Activated CD4-positive, alpha-beta memory T cell treated with anti-CD3 and anti-CD28 coated beads, Interleukin-2, amount 10 ng/mL, durations not matched to agents 7 days and 5 days (primary cell): ENCODE measurements at regions of chr12 and their contacts with region 1.

Region 1: GRCh38 chr12:52032804-52033502 is 18.3 kb upstream of the NR4A1 start:
- DNase-seq: peak; percentile 93
- H3K4me3 Mint-ChIP-seq: peak overlapping the region; percentile 68
- H3K27ac Mint-ChIP-seq: peak overlapping the region; percentile 54
- H3K4me1 Mint-ChIP-seq: peaks cover 32% of the 10 kb centered on the region
- H3K27me3 Mint-ChIP-seq: peaks cover 19% of the 10 kb centered on the region

Region 2: GRCh38 chr12:51941011-51941581 is 91.9 kb before region 1 on chr12:
- CTCF ChIA-PET with region 1: no interaction called
- POLR2A ChIA-PET with region 1: no interaction called
- DNase-seq: no peak
- H3K4me3 Mint-ChIP-seq: no peak overlapping the region
- H3K27ac Mint-ChIP-seq: no peak overlapping the region
- H3K4me1 Mint-ChIP-seq: no peaks in the 10 kb centered on the region
- H3K27me3 Mint-ChIP-seq: peaks cover 24% of the 10 kb centered on the region

Region 3: DNA sequence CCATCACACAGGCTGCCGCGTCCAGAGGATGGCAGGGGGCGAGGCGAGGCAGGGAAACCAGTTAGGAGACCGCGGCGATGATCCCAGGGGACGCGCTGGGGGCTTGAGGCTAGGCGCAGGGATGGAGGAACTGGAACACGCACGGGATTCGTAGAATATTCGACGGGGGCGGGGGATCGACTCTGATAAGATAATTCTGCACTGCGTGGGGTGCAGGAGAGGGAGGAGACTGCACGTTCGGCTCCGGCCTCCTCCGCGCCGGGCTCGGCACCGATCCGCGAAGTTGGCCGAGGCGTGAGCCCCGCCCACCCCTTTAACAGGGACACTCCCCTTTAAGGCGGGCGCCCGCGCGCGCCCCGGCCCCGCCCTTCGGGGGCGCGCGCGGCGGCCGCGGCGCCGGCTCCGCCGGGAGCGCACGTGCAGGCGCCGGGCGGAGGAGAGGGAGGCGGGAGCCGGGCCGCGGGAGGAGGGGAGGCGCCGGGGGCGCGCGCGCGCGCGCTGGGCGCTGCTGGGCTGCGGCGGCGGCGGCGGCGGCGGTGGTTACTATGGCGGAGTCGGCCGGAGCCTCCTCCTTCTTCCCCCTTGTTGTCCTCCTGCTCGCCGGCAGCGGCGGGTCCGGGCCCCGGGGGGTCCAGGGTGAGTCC is 81.6 kb before region 1 on chr12 and contains the start of gene ACVR1B:
- CTCF ChIA-PET with region 1: no interaction called
- POLR2A ChIA-PET with region 1: no interaction called
- DNase-seq: peak; percentile 88
- H3K4me3 Mint-ChIP-seq: peak within 1 kb of the TSS; percentile 86
- H3K27ac Mint-ChIP-seq: peak within 1 kb of the TSS; percentile 37
- H3K4me1 Mint-ChIP-seq: peaks cover 20% of the 10 kb centered on the region
- H3K27me3 Mint-ChIP-seq: peaks cover 51% of the 10 kb centered on the region
- total RNA-seq, gene ACVR1B: 4.5 to 5.2 TPM

Region 4: DNA sequence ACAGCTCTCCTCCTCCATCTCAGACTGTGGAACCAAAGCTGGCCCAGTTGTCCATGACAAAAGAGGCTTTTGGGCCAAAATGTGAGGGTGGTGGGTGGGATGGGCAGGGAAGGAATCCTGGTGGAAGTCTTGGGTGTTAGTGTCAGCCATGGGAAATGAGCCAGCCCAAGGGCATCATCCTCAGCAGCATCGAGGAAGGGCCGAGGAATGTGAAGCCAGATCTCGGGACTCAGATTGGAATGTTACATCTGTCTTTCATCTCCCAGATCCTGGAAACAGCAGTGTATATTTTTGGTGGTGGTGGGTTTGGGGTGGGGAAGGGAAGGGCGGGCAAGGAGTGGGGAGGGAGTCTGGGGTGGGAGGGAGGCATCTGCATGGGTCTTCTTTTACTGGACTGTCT is 38.0 kb before region 1 on chr12:
- CTCF ChIA-PET with region 1: interaction called, 16 read pairs
- POLR2A ChIA-PET with region 1: no interaction called
- DNase-seq: no peak
- H3K4me3 Mint-ChIP-seq: no peak overlapping the region
- H3K27ac Mint-ChIP-seq: no peak overlapping the region
- H3K4me1 Mint-ChIP-seq: peaks cover 4% of the 10 kb centered on the region
- H3K27me3 Mint-ChIP-seq: no peaks in the 10 kb centered on the region

Region 5: DNA sequence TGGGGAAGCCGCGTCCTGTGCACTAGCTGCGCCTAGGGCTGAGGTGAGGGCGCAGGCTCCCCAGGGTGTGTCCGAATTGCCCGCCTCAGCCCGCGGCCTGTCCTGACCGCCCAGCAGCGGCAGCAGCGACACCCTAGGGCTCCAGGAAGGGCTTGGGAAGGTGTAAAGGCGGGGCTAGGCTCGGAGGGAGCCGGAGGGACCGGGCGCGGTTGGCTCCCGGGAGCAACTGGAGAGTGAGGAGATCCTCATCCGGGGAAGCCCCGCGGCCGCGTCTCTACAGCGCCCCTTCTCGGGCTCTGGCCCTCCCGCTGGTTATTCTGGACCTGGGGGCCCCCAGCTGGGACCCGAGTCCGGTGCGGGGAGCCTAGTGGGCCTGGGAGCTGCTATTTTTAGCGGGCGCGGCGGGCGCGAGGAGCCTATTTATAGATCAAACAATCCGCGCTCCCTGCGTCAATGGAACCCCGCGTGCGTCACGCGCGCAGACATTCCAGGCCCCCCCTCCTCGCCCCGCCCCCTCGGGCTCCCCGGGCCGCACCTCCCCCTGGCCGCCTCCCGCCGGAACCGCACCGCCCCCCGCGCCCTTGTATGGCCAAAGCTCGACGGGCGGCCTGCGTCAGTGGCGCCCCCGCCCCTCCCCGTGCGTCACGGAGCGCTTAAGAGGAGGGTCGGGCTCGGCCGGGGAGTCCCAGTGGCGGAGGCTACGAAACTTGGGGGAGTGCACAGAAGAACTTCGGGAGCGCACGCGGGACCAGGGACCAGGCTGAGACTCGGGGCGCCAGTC is 18.0 kb after region 1 on chr12 and contains the start of gene NR4A1:
- CTCF ChIA-PET with region 1: interaction called, 14 read pairs
- POLR2A ChIA-PET with region 1: interaction called, 22 read pairs
- DNase-seq: peak; percentile 98
- H3K4me3 Mint-ChIP-seq: peak within 1 kb of the TSS; percentile 85
- H3K27ac Mint-ChIP-seq: peak within 1 kb of the TSS; percentile 82
- H3K4me1 Mint-ChIP-seq: peaks cover 46% of the 10 kb centered on the region
- H3K27me3 Mint-ChIP-seq: peaks cover 6% of the 10 kb centered on the region
- total RNA-seq, gene NR4A1: 10.0 to 10.5 TPM

Region 6: DNA sequence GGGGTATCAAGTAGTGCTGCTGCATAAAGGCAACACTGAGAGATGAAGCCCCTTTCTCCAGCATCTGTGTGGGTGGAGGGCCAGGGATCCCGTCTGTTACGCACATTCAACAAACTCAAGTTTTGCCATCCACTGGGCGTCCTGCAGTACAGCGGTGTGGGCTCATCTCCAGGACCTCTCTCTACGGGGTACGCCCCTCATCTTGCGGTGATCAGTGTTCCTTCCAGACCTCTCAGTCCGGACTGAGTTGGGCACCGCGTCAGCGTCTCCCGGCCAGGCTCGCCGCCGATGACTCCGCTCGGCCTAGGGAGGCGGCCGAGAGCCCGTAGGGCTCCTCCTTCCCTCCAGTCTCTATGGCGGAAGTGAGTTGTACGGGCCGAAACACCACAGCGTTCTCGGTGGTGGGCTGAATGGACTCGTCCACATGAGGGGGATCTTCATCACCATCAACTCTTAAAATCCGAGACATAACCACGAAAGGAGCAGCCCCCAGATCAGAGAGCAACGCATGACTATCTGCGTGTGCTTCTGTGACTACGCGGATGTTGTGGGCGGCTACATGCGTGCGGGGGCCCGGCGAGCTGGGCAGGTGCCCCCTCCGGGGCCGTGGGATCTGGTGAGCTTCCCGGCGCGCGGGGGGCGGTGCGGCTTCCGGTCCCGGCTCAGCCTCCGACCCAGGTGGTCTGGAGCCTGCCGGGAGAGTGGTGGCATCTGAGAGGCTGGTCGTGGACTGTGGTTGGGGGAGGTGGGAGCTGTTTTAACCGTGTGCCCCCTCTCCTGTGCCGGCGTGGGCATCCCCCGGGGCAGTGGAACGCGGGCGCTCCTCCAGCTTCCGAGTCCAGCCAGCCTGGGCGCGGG is 36.6 kb after region 1 on chr12 and contains the start of gene ATG101:
- CTCF ChIA-PET with region 1: interaction called, 55 read pairs
- POLR2A ChIA-PET with region 1: interaction called, 14 read pairs
- DNase-seq: peak; percentile 88
- H3K4me3 Mint-ChIP-seq: peak within 1 kb of the TSS; percentile 98
- H3K27ac Mint-ChIP-seq: peak within 1 kb of the TSS; percentile 96
- H3K4me1 Mint-ChIP-seq: peaks cover 62% of the 10 kb centered on the region
- H3K27me3 Mint-ChIP-seq: peaks cover 7% of the 10 kb centered on the region
- total RNA-seq, gene ATG101: 30.5 to 30.8 TPM

Region 7: GRCh38 chr12:52082988-52083637 is 50.2 kb after region 1 on chr12:
- CTCF ChIA-PET with region 1: interaction called, 309 read pairs
- POLR2A ChIA-PET with region 1: interaction called, 4 read pairs
- DNase-seq: peak; percentile 69
- H3K4me3 Mint-ChIP-seq: no peak overlapping the region
- H3K27ac Mint-ChIP-seq: no peak overlapping the region
- H3K4me1 Mint-ChIP-seq: peaks cover 10% of the 10 kb centered on the region
- H3K27me3 Mint-ChIP-seq: peaks cover 13% of the 10 kb centered on the region

Region 8: GRCh38 chr12:52192173-52192791 is 159.3 kb after region 1 on chr12:
- CTCF ChIA-PET with region 1: no interaction called
- POLR2A ChIA-PET with region 1: no interaction called
- DNase-seq: peak; percentile 21
- H3K4me3 Mint-ChIP-seq: no peak overlapping the region
- H3K27ac Mint-ChIP-seq: no peak overlapping the region
- H3K4me1 Mint-ChIP-seq: peaks cover 10% of the 10 kb centered on the region
- H3K27me3 Mint-ChIP-seq: peaks cover 6% of the 10 kb centered on the region